ENCODE measurements at regions of chr18 and their contacts with region 1.

Region 1: DNA sequence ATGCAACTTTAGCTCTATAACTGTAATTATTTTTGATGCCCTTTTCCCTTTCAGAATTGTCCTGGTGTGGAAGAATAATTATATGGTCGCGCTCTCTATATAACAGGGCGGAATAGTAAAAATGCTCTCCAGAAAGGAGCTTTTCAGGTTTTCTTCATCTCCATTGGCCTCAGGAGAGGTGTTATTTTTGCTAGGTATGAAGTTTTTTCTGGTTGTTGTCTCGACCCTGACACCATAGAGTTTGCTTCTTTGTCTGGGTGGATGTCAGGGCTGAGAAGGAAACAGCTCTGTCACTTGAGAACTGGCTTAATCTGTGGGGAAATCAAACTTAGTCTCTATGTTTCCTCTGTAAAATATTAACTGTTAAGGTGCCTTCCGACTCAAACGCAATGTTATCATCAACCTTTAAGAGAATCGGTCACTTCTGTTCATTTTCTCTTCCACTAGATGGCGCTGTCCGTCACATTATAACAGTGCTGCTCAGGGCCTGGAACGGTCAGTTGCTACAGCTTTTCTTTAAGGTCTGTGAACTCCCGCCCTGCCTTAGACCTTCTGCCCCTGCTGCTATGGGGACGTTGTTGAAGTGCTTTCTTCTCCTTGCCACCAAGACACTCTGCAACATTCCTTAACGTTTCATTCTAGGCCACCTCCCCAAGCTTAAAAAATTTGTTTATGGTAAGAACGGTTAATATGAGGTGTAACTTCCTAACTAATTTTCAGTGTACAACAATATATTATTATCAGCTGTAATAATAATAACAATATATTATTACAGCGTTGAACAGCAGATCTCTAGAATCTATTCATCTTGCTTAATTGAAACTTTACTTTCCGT is 23.8 kb upstream of the SERPINB12 start:
- DNase-seq: peak; percentile 16
- ATAC-seq: peak; percentile 98
- H3K4me3 ChIP-seq: no peak overlapping the region
- H3K27ac ChIP-seq: no peak overlapping the region
- H3K4me1 ChIP-seq: no peaks in the 10 kb centered on the region
- H3K27me3 ChIP-seq: no peaks in the 10 kb centered on the region; a peak in 1 of 4 replicates
- CTCF ChIP-seq: peak; percentile 58 to 65 (median 63)
- EP300 ChIP-seq: no peak
- POLR2A ChIP-seq: no peak
- RAD21 ChIP-seq: peak; percentile 93

Region 2: DNA sequence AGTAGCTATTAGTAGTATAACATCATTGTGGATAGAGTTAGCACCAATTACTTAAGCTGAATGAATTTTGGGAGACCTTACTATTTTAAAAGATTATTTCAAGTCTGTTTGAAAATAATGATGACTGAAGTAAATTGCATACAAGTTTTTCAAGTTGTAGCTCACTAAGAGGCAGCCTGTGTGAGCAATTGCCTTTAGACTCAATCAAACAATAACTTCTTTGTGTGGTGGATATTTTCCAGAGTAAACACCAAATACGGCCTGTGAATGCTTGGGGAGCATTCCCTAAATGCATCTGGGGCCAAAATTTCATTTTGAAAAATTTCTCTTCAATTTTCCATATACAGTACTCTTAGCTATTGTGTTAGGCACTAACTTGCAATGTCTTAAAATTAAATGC is 31.7 kb after region 1 on chr18:
- CTCF ChIA-PET with region 1: interaction called, 11 read pairs
- POLR2A ChIA-PET with region 1: no interaction called
- RAD21 ChIA-PET with region 1: no interaction called
- SMC1A ChIA-PET with region 1: interaction called, 3 read pairs
- in situ Hi-C with region 1: no loop called
- intact Hi-C with region 1: no loop called
- DNase-seq: no peak
- ATAC-seq: no peak
- H3K4me3 ChIP-seq: no peak overlapping the region
- H3K27ac ChIP-seq: no peak overlapping the region
- H3K4me1 ChIP-seq: no peaks in the 10 kb centered on the region
- H3K27me3 ChIP-seq: no peaks in the 10 kb centered on the region; a peak in 1 of 4 replicates
- CTCF ChIP-seq: no peak
- EP300 ChIP-seq: no peak
- POLR2A ChIP-seq: no peak
- RAD21 ChIP-seq: no peak

Region 3: GRCh38 chr18:63570716-63571115 is 52.3 kb after region 1 on chr18:
- CTCF ChIA-PET with region 1: interaction called, 237 read pairs
- POLR2A ChIA-PET with region 1: no interaction called
- RAD21 ChIA-PET with region 1: interaction called, 149 read pairs
- SMC1A ChIA-PET with region 1: interaction called, 130 read pairs
- in situ Hi-C with region 1: loop called (anchors 5 kb)
- intact Hi-C with region 1: no loop called
- DNase-seq: no peak
- ATAC-seq: no peak
- H3K4me3 ChIP-seq: no peak overlapping the region
- H3K27ac ChIP-seq: no peak overlapping the region
- H3K4me1 ChIP-seq: no peaks in the 10 kb centered on the region
- H3K27me3 ChIP-seq: peaks cover 0 to 5% of the 10 kb centered on the region in 2 experiments; a peak in 2 of 4 replicates
- CTCF ChIP-seq: no peak
- EP300 ChIP-seq: no peak
- POLR2A ChIP-seq: no peak
- RAD21 ChIP-seq: no peak

Region 4: GRCh38 chr18:63648241-63648640 is 129.8 kb after region 1 on chr18:
- CTCF ChIA-PET with region 1: no interaction called
- POLR2A ChIA-PET with region 1: no interaction called
- RAD21 ChIA-PET with region 1: no interaction called
- SMC1A ChIA-PET with region 1: no interaction called
- in situ Hi-C with region 1: no loop called
- intact Hi-C with region 1: no loop called
- DNase-seq: no peak
- ATAC-seq: no peak
- H3K4me3 ChIP-seq: no peak overlapping the region
- H3K27ac ChIP-seq: no peak overlapping the region
- H3K4me1 ChIP-seq: no peaks in the 10 kb centered on the region
- H3K27me3 ChIP-seq: no peaks in the 10 kb centered on the region
- CTCF ChIP-seq: no peak
- EP300 ChIP-seq: no peak
- POLR2A ChIP-seq: no peak
- RAD21 ChIP-seq: no peak

Region 5: GRCh38 chr18:63676526-63676925 is 158.1 kb after region 1 on chr18:
- CTCF ChIA-PET with region 1: interaction called, 17 read pairs
- POLR2A ChIA-PET with region 1: interaction called, 3 read pairs
- RAD21 ChIA-PET with region 1: interaction called, 5 read pairs
- SMC1A ChIA-PET with region 1: interaction called, 5 read pairs
- in situ Hi-C with region 1: loop called (anchors 10 kb)
- intact Hi-C with region 1: loop called (anchors 1 kb)
- DNase-seq: no peak
- ATAC-seq: peak; percentile 86
- H3K4me3 ChIP-seq: no peak overlapping the region
- H3K27ac ChIP-seq: no peak overlapping the region
- H3K4me1 ChIP-seq: no peaks in the 10 kb centered on the region
- H3K27me3 ChIP-seq: no peaks in the 10 kb centered on the region
- CTCF ChIP-seq: peak; percentile 58 to 66 (median 59); a peak in 5 of 6 replicates
- EP300 ChIP-seq: no peak
- POLR2A ChIP-seq: no peak
- RAD21 ChIP-seq: peak; percentile 68

Region 6: GRCh38 chr18:63979409-63979920 is 461.1 kb after region 1 on chr18:
- CTCF ChIA-PET with region 1: no interaction called
- POLR2A ChIA-PET with region 1: no interaction called
- RAD21 ChIA-PET with region 1: no interaction called
- SMC1A ChIA-PET with region 1: interaction called, 5 read pairs
- in situ Hi-C with region 1: loop called (anchors 25 kb)
- intact Hi-C with region 1: loop called (anchors 5 kb)
- DNase-seq: no peak
- ATAC-seq: peak; percentile 67
- H3K4me3 ChIP-seq: no peak overlapping the region
- H3K27ac ChIP-seq: no peak overlapping the region
- H3K4me1 ChIP-seq: peaks cover 6% of the 10 kb centered on the region
- H3K27me3 ChIP-seq: no peaks in the 10 kb centered on the region
- CTCF ChIP-seq: peak; percentile 85 to 96 (median 89)
- EP300 ChIP-seq: no peak
- POLR2A ChIP-seq: no peak
- RAD21 ChIP-seq: peak; percentile 72